ENCODE measurements at regions of chr10 and their contacts with region 1.

Region 1: DNA sequence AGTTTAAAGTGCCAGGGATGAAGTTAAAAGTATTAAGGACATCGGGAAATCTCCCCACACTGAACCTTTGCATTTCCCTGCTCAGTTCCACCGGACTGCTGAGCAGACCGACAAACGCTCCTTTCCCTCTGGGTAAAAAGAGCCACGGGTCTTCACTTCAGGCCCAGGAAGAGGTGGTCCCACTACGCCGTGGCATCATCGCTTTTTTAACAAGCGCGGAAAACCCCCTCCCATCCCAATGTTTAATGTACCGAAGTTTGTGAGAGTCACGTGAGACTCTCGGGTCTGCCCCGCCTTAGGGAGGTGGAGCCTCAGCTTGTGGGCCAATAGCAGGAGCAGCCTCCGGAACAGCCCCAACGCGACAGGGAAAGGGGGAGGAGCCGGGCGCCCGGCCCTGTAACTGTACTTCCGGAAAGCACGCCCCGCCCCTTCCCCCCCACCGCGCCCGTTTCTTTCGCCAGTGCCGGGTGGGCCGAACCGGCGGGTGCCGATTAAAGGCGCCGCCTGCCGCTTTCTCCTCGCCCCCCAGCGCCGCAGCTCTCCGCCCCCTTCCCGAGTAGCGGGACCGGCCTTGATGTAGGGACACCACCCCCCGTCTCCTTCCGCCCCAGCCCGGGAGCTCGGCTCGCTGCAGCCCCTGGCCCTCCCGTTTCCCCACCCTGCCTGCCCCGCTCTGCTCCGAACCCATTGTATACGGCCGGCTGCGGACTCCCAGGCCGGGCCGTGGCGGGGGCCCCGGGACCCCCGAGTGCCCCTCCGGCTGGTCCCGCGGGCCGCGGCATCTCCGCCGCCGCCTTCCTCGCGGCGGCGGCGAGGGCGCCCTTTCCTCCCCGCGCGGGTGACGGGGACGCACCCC is 2.2 kb upstream of the TRIM8 start:
- DNase-seq: peak; percentile 99
- ATAC-seq: peak; percentile 72
- H3K4me3 Mint-ChIP-seq: peak overlapping the region; percentile 84
- H3K27ac Mint-ChIP-seq: peak overlapping the region; percentile 92
- H3K4me1 Mint-ChIP-seq: peaks cover 19% of the 10 kb centered on the region
- H3K27me3 Mint-ChIP-seq: no peaks in the 10 kb centered on the region

Region 2: DNA sequence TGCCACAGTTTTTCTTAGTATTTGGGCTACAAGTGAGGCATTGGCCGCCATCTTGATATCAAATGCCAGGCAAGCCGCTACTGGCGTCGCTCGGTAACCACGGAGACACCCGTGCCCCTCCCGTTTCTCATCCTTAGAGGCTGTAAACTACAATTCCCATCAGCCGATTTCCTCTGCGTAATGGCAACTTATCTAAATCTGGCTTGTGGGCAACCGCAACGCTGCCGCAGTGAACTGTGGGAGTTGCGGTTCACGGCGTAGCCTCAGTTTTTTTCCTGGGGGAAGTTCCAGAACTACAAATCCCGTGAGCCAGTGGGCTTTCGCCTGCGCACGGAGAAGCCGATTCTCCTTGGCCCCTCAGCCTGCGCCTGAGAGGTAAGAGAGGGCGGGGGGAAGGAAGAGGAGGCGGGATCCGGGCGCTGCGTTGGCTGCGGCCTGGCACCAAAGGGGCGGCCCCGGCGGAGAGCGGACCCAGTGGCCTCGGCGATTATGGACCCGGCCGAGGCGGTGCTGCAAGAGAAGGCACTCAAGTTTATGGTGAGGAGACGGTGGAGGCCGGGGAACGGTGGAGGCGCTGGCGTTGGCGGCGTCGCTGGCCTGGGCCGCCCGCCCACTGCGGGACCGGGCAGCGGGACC is 1288.3 kb before region 1 on chr10 and contains the start of gene BTRC:
- CTCF ChIA-PET with region 1: no interaction called
- POLR2A ChIA-PET with region 1: no interaction called
- intact Hi-C with region 1: loop called in 1 of 2 experiments (anchors 10 kb)
- DNase-seq: peak; percentile 97
- ATAC-seq: peak; percentile 98
- H3K4me3 Mint-ChIP-seq: peak within 1 kb of the TSS; percentile 91
- H3K27ac Mint-ChIP-seq: peak within 1 kb of the TSS; percentile 94
- H3K4me1 Mint-ChIP-seq: peaks cover 27% of the 10 kb centered on the region
- H3K27me3 Mint-ChIP-seq: peaks cover 12% of the 10 kb centered on the region
- total RNA-seq, gene BTRC: 15.5 to 18.7 TPM

Region 3: DNA sequence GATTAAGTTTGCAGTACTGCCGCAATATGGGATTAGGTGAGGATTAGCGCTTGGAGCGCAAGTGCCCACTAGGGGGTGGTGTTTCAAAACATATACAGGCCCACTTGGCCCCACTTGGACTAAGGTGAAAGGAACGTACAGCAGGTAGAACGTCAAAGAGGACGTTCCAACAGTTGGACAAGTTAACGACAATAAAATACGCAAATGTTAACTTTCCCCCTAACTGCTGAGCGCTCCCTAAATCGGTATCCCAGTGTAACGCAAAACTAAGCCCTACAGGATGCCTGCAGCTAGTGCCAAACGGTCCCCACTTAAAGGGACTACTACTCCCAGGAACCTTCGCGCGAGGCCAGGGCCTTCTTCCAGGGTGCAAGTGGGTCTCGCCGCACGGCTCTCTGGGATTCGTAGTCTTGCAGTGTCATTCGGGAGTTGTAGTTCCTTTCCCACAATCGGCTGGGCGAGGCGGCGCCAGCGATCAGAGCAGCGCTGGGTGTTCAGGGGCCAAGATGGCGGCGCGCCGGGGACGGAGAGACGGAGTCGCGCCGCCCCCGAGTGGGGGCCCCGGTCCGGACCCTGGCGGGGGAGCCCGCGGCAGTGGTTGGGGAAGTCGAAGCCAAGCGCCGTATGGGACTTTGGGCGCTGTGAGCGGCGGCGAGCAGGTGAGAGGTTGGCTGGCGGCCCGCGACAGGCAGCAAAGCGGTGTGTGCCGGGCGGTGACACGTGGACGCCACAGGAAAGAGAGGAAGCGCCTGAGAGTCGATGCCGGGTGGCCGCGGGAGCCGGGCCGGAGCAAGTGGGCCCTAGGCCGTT is 509.3 kb before region 1 on chr10 and contains the start of gene PPRC1:
- CTCF ChIA-PET with region 1: no interaction called
- POLR2A ChIA-PET with region 1: no interaction called
- intact Hi-C with region 1: loop called in 1 of 2 experiments (anchors 5 kb)
- DNase-seq: peak; percentile 99
- ATAC-seq: peak; percentile 96
- H3K4me3 Mint-ChIP-seq: peak within 1 kb of the TSS; percentile 94
- H3K27ac Mint-ChIP-seq: peak within 1 kb of the TSS; percentile 94
- H3K4me1 Mint-ChIP-seq: peaks cover 38% of the 10 kb centered on the region
- H3K27me3 Mint-ChIP-seq: no peaks in the 10 kb centered on the region
- total RNA-seq, gene PPRC1: 61.3 to 74.7 TPM

Region 4: DNA sequence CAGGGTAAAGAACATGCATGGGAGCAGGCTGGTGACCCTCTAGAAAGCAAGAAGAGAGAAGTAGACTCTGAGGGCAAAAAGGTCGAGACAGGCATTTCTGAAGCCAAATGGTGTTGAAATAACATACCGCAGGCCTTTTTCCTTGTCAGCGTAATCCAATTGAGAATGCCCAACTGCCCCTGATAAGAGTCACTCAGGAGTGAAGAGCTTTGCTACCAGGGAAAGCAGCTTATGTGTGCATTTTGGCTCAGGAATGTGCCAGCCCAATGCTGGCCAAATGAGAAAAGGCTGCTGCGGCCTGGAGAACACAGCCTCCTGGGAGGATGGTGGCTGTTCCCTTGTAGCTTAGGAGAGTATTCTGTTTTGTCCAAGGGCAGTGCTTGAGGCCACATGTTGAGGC is 308.0 kb before region 1 on chr10:
- CTCF ChIA-PET with region 1: no interaction called
- POLR2A ChIA-PET with region 1: no interaction called
- intact Hi-C with region 1: no loop called
- DNase-seq: no peak
- ATAC-seq: no peak
- H3K4me3 Mint-ChIP-seq: no peak overlapping the region
- H3K27ac Mint-ChIP-seq: no peak overlapping the region
- H3K4me1 Mint-ChIP-seq: peaks cover 19% of the 10 kb centered on the region
- H3K27me3 Mint-ChIP-seq: no peaks in the 10 kb centered on the region

Region 5: DNA sequence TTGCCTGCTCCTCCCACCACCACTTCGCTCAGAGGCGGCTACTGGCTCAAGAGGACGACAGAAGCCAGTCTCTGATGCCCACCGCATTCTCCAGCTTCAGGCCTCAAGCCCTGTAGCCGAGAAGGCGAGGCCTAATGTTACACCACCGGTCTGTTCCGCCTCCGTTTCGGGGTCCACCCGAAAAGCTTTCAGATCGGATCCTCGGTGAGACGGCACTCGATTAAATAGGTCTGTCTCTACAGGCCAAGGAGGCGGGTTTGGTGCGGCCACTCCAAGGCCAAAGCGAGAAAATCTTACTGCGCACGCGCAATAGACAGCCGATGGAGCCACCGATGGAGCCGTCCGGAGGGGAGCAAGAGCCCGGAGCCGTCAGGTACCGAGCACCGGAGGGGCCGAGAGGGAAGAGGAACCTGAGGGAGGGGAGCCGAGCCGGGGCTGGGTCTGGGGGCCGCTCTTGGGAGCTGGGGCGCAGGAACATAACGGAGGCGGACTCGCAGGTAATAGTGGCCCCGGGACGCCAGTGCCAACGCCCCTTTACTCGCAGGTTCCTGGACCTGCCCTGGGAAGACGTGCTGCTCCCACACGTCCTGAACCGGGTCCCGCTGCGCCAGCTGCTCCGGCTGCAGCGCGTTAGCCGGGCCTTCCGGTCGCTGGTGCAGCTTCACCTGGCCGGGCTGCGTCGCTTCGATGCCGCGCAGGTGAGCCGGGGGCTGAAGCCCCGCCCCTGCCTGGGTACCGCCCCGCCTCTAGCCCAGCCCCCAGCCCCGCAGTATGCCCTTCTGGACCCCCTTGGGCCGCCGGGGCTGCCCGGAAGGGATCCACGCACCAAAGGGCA is 221.1 kb before region 1 on chr10 and contains the start of gene FBXL15:
- CTCF ChIA-PET with region 1: no interaction called
- POLR2A ChIA-PET with region 1: no interaction called
- intact Hi-C with region 1: loop called in 1 of 2 experiments (anchors 1 kb)
- DNase-seq: peak; percentile 98
- ATAC-seq: peak; percentile 80
- H3K4me3 Mint-ChIP-seq: peak within 1 kb of the TSS; percentile 96
- H3K27ac Mint-ChIP-seq: peak within 1 kb of the TSS; percentile 87
- H3K4me1 Mint-ChIP-seq: peaks cover 30% of the 10 kb centered on the region
- H3K27me3 Mint-ChIP-seq: peaks cover 14% of the 10 kb centered on the region
- total RNA-seq, gene FBXL15: 5.4 to 11.9 TPM

Region 6: GRCh38 chr10:102678842-102679289 is 36.8 kb after region 1 on chr10:
- CTCF ChIA-PET with region 1: interaction called, 9 read pairs
- POLR2A ChIA-PET with region 1: interaction called, 5 read pairs
- intact Hi-C with region 1: loop called (anchors 1 kb)
- DNase-seq: peak; percentile 53
- ATAC-seq: no peak
- H3K4me3 Mint-ChIP-seq: no peak overlapping the region
- H3K27ac Mint-ChIP-seq: no peak overlapping the region
- H3K4me1 Mint-ChIP-seq: peaks cover 45% of the 10 kb centered on the region
- H3K27me3 Mint-ChIP-seq: no peaks in the 10 kb centered on the region

Region 7: DNA sequence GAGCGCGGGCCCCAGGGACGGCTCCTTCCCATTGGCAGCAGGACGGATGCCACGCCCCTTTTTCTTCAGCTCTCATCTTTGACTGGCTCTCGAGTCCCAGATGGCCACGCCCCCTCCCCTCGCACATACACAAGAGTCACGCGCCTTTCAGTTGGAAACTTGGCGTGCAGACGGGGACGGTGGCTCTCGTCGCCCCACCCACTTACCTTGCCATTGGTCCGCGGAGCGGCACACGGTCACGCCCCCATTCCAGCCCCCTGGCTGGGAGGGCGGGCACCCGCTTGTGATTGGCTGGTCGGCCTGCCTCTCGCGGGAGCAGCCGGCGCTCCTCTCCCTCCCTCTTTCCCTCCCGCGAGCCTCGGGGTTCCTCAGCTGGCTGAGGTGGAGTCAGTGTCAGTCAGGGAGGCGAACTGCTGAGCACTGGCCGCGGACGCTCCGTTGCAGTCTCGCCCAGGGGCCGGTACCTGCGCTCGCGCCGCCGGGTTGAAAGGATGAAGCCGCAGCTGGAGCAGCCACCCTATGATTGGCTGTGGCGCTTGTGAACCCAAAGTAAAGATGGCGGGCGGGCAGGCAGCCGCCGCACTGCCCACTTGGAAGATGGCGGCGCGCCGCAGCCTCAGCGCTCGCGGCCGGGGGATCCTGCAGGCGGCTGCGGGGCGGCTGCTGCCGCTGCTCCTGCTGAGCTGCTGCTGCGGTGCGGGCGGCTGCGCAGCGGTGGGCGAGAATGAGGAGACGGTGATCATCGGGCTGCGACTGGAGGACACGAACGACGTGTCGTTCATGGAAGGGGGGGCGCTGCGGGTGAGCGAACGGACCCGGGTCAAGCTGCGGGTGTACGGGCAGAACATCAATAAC is 276.1 kb after region 1 on chr10 and contains the start of gene CNNM2:
- CTCF ChIA-PET with region 1: no interaction called
- POLR2A ChIA-PET with region 1: no interaction called
- intact Hi-C with region 1: loop called (anchors 1 to 2 kb)
- DNase-seq: peak; percentile 100
- ATAC-seq: peak; percentile 93
- H3K4me3 Mint-ChIP-seq: peak within 1 kb of the TSS; percentile 83
- H3K27ac Mint-ChIP-seq: peak within 1 kb of the TSS; percentile 88
- H3K4me1 Mint-ChIP-seq: peaks cover 53% of the 10 kb centered on the region
- H3K27me3 Mint-ChIP-seq: peaks cover 14% of the 10 kb centered on the region
- total RNA-seq, gene CNNM2: 4.2 to 4.5 TPM

Region 8: GRCh38 chr10:104121520-104122224 is 1479.6 kb after region 1 on chr10 and contains the start of gene SFR1:
- CTCF ChIA-PET with region 1: no interaction called
- POLR2A ChIA-PET with region 1: no interaction called
- intact Hi-C with region 1: loop called in 1 of 2 experiments (anchors 5 kb)
- DNase-seq: peak; percentile 99
- ATAC-seq: peak; percentile 93
- H3K4me3 Mint-ChIP-seq: peak within 1 kb of the TSS; percentile 91
- H3K27ac Mint-ChIP-seq: peak within 1 kb of the TSS; percentile 97
- H3K4me1 Mint-ChIP-seq: peaks cover 47% of the 10 kb centered on the region
- H3K27me3 Mint-ChIP-seq: no peaks in the 10 kb centered on the region
- total RNA-seq, gene SFR1: 17.2 to 20.5 TPM